Gastrocnemius medialis (tissue), 4 donors: ENCODE measurements at regions of chr5 and their contacts with region 1.

Region 1: DNA sequence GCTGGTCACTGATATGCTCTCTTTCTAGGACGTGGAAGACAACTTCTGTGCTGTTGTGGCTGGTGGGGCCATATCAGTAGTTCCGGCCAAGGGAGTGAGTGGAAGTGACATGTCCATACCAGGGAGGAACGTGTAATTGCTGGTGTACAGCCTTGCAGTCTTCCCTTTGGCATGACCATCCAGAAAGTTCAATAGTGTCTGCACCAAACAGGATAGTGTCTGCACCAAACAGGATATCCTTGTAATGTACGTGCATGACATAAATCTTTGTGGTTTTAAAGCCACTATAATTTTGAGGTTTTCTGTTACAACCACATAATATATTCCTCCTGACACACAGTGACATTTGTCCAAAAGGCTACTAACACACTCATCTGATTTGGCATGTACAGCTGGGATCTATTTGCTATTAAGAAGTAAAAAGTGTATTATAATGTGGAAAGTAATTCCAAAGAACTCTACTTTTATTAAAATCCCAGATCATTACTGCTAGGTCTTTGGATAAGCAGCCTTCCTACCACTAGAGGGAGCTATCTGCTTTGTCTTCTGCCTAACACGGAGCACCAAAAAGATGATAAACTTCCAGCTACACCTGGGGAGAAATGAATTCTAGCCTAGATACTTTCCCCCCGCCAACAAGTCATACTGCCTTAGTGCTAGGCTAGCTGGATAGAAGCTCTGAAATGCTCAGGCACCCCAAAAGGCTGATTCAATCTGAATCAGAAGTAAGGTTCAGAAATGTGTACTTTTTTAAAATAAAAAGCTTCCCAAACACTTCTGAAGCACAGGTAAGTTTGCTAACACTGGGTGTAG is 52.7 kb downstream of the RNF145 start:
- DNase-seq: peak in 1 of 2 donors; percentile 6
- ATAC-seq: peak; percentile 77 to 93
- H3K4me3 ChIP-seq: no peak overlapping the region
- H3K27ac ChIP-seq: no peak overlapping the region
- H3K4me1 ChIP-seq: no peaks in the 10 kb centered on the region
- H3K27me3 ChIP-seq: no peaks in the 10 kb centered on the region
- CTCF ChIP-seq: peak; percentile 66 to 86 (median 74)
- POLR2A ChIP-seq: no peak

Region 2: DNA sequence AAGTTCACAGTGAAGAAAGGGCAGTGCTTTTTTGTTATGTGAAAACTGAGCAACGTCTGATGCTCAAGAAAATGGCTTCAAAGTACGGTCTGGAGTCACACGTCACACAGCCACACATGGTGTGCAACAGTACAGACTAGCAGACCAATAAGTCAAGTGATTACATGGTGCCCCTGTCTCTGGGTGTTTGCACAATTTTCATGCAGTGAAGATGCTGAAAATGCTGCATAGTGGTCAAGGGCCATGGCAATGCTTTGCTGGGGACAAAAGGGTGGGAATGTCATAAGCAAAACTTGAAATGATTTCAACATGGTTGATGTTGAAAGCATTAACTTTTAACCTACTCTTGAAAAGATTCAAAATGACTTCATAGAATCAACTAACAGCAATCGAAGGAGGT is 288.1 kb before region 1 on chr5:
- in situ Hi-C with region 1: no loop called
- intact Hi-C with region 1: no loop called
- DNase-seq: peak in 1 of 2 donors; percentile 12
- ATAC-seq: peak in 1 of 2 donors; percentile 24
- H3K4me3 ChIP-seq: no peak overlapping the region
- H3K27ac ChIP-seq: no peak overlapping the region
- H3K4me1 ChIP-seq: peaks cover 0 to 4% of the 10 kb centered on the region in 2 donors
- H3K27me3 ChIP-seq: no peaks in the 10 kb centered on the region
- CTCF ChIP-seq: no peak
- POLR2A ChIP-seq: no peak

Region 3: GRCh38 chr5:159209438-159210305 is 53.0 kb after region 1 on chr5 and contains the start of gene RNF145:
- in situ Hi-C with region 1: no loop called
- intact Hi-C with region 1: loop called (anchors 5 kb)
- DNase-seq: peak; percentile 45 to 73
- ATAC-seq: peak; percentile 81 to 82
- H3K4me3 ChIP-seq: peak within 1 kb of the TSS; percentile 84 to 98 (median 90)
- H3K27ac ChIP-seq: peak within 1 kb of the TSS; percentile 85 to 93 (median 90)
- H3K4me1 ChIP-seq: peaks cover 31 to 34% of the 10 kb centered on the region in 2 donors
- H3K27me3 ChIP-seq: no peaks in the 10 kb centered on the region
- CTCF ChIP-seq: peak in 1 of 5 experiments; percentile 14
- POLR2A ChIP-seq: peak; percentile 65 to 74
- total RNA-seq, gene RNF145: 6.7 to 20.8 (median 9.7) TPM

Region 4: DNA sequence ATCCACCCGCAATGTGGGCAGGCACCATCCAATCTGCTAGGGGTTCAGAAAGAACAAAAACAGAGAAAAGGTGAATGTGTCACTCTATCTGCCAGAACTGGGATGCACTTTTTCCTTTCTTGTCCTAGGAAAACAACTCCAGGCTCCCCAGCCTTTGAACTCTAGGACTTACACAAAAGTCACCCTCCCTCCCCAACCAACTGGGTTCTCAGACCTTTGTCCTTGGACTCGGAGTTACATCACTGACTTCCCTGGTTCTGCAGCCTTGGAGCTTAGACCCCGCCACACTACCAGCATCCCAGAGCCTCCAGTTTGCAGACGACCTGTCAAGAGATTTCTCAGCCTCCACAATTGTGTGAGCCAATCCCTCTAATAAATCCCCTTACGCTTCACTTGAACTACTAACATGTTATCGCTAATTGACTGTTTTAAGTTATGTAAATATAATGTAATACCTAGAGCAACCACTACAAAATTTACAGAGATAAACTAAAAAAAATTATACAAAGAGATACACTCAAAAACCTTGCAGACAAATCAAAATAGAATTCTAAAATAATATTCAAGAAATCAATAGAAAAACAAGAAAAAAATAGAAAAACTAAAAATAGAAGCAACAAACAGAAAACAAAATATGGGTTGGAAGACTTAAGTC is 101.1 kb after region 1 on chr5:
- in situ Hi-C with region 1: loop called (anchors 5 to 25 kb)
- intact Hi-C with region 1: loop called (anchors 2 kb)
- DNase-seq: no peak
- ATAC-seq: no peak
- H3K4me3 ChIP-seq: no peak overlapping the region
- H3K27ac ChIP-seq: no peak overlapping the region
- H3K4me1 ChIP-seq: peaks cover 7 to 8% of the 10 kb centered on the region in 2 donors
- H3K27me3 ChIP-seq: peaks cover 0 to 13% (median 0%) of the 10 kb centered on the region in 3 donors
- CTCF ChIP-seq: no peak
- POLR2A ChIP-seq: no peak

Region 5: GRCh38 chr5:159262859-159263567 is 106.4 kb after region 1 on chr5 and contains the start of gene UBLCP1:
- in situ Hi-C with region 1: loop called (anchors 5 to 25 kb)
- intact Hi-C with region 1: loop called (anchors 2 kb)
- DNase-seq: peak; percentile 61 to 68
- ATAC-seq: peak; percentile 97 to 98
- H3K4me3 ChIP-seq: peak within 1 kb of the TSS; percentile 84 to 99 (median 92)
- H3K27ac ChIP-seq: peak within 1 kb of the TSS; percentile 89 to 94 (median 90)
- H3K4me1 ChIP-seq: peaks cover 19 to 20% of the 10 kb centered on the region in 2 donors
- H3K27me3 ChIP-seq: peaks cover 0 to 4% (median 0%) of the 10 kb centered on the region in 3 donors
- CTCF ChIP-seq: no peak
- POLR2A ChIP-seq: peak in 1 of 2 donors; percentile 48
- total RNA-seq, gene UBLCP1: 11.1 to 16.0 (median 14.3) TPM

Region 6: GRCh38 chr5:159316519-159317383 is 160.1 kb after region 1 on chr5:
- in situ Hi-C with region 1: no loop called
- intact Hi-C with region 1: loop called (anchors 5 kb)
- DNase-seq: no peak
- ATAC-seq: no peak
- H3K4me3 ChIP-seq: no peak overlapping the region
- H3K27ac ChIP-seq: no peak overlapping the region
- H3K4me1 ChIP-seq: no peaks in the 10 kb centered on the region
- H3K27me3 ChIP-seq: peaks cover 0 to 6% (median 3%) of the 10 kb centered on the region in 3 donors
- CTCF ChIP-seq: peak in 3 of 5 experiments; percentile 9 to 46 (median 26)
- POLR2A ChIP-seq: no peak

Region 7: DNA sequence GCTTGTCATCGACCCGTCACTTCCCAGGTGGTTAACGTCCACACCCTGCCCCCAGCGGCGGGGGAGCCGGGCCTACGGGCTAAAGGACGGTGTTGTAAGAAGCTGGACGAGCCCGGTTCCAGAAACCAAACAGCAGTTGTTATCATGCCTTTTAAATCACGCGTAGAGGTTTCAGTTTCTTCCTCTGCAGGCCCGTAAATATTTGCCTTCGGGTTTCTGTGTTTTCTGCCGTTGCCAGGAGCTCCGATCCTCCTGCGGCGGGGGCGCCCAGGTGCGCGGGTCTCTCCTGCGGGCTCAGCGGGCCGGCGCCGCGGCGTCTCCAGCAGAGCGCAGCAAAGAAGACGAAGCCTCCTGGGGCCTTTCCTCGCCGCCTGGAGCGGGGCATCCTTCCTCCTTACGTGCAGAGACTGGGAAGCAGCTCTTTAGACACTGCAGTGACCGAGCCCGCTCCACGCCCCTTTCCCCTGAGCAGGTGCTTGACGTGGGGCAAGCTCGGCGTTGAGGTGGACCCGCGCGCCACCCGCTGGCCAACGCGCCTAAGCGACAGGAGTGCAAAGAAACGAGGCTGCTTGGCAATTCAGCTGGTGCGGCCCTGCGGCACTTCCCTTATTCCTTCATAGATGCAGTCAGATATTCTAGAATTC is 830.5 kb after region 1 on chr5:
- in situ Hi-C with region 1: loop called in 3 of 4 experiments (anchors 10 to 25 kb)
- intact Hi-C with region 1: loop called (anchors 1 kb)
- DNase-seq: peak; percentile 38 to 66
- ATAC-seq: peak; percentile 70 to 81
- H3K4me3 ChIP-seq: peak overlapping the region; percentile 45 to 61 (median 48)
- H3K27ac ChIP-seq: no peak overlapping the region
- H3K4me1 ChIP-seq: peaks cover 3 to 8% of the 10 kb centered on the region in 2 donors
- H3K27me3 ChIP-seq: peaks cover 0 to 12% (median 7%) of the 10 kb centered on the region in 3 donors
- CTCF ChIP-seq: peak; percentile 61 to 77 (median 71)
- POLR2A ChIP-seq: no peak